Endothelial cell of umbilical vein (primary cell): ENCODE measurements at regions of chr7 and their contacts with region 1.

Region 1: GRCh38 chr7:92833024-92833765 is 3.2 kb downstream of the CDK6 start:
- DNase-seq: peak; percentile 78
- H3K4me3 ChIP-seq: peak overlapping the region; percentile 68 to 80 (median 71)
- H3K27ac ChIP-seq: peak overlapping the region; percentile 78
- H3K4me1 ChIP-seq: peaks cover 35% of the 10 kb centered on the region
- H3K27me3 ChIP-seq: peaks cover 0 to 12% of the 10 kb centered on the region in 2 experiments
- CTCF ChIP-seq: peak; percentile 79 to 92
- POLR2A ChIP-seq: no peak

Region 2: GRCh38 chr7:92621026-92621540 is 212.1 kb before region 1 on chr7:
- CTCF ChIA-PET with region 1: interaction called, 52 read pairs
- POLR2A ChIA-PET with region 1: no interaction called
- dilution Hi-C with region 1: no loop called
- intact Hi-C with region 1: loop called (anchors 1 kb)
- DNase-seq: peak; percentile 90
- H3K4me3 ChIP-seq: no peak overlapping the region
- H3K27ac ChIP-seq: peak overlapping the region; percentile 75
- H3K4me1 ChIP-seq: peaks cover 23% of the 10 kb centered on the region
- H3K27me3 ChIP-seq: no peaks in the 10 kb centered on the region
- CTCF ChIP-seq: peak; percentile 53 to 64
- POLR2A ChIP-seq: no peak

Region 3: GRCh38 chr7:92698237-92698841 is 134.9 kb before region 1 on chr7:
- CTCF ChIA-PET with region 1: interaction called, 77 read pairs
- POLR2A ChIA-PET with region 1: no interaction called
- dilution Hi-C with region 1: no loop called
- intact Hi-C with region 1: loop called (anchors 1 kb)
- DNase-seq: peak; percentile 95
- H3K4me3 ChIP-seq: peak overlapping the region in 1 of 3 experiments; percentile 1
- H3K27ac ChIP-seq: peak overlapping the region; percentile 75
- H3K4me1 ChIP-seq: peaks cover 44% of the 10 kb centered on the region
- H3K27me3 ChIP-seq: no peaks in the 10 kb centered on the region
- CTCF ChIP-seq: no peak
- POLR2A ChIP-seq: peak; percentile 35

Region 4: GRCh38 chr7:92768501-92769393 is 64.4 kb before region 1 on chr7:
- CTCF ChIA-PET with region 1: interaction called, 16 read pairs
- POLR2A ChIA-PET with region 1: no interaction called
- dilution Hi-C with region 1: no loop called
- intact Hi-C with region 1: loop called (anchors 5 kb)
- DNase-seq: no peak
- H3K4me3 ChIP-seq: no peak overlapping the region
- H3K27ac ChIP-seq: no peak overlapping the region
- H3K4me1 ChIP-seq: peaks cover 14% of the 10 kb centered on the region
- H3K27me3 ChIP-seq: no peaks in the 10 kb centered on the region
- CTCF ChIP-seq: no peak
- POLR2A ChIP-seq: no peak

Region 5: DNA sequence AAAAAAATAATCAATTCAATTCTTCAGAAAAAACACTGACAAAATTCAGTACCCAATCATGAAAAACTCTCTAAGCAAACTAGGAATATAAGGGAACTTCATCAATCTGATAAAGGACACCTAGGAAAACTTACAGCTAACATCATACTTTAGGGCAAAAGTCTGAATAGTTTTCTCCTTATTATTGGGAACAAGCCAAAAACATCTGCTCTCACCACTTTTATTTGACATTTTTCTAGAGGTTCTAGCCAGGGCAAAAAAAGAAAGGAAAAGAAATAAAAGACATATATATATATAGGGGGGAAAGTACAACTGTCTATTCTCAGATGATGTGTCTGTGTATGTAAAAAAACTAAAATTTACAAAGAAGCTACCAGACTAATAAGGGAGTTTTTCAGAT is 15.8 kb before region 1 on chr7:
- CTCF ChIA-PET with region 1: interaction called, 13 read pairs
- POLR2A ChIA-PET with region 1: no interaction called
- dilution Hi-C with region 1: no loop called
- intact Hi-C with region 1: loop called (anchors 1 kb)
- DNase-seq: no peak
- H3K4me3 ChIP-seq: no peak overlapping the region
- H3K27ac ChIP-seq: no peak overlapping the region
- H3K4me1 ChIP-seq: peaks cover 8% of the 10 kb centered on the region
- H3K27me3 ChIP-seq: no peaks in the 10 kb centered on the region
- CTCF ChIP-seq: no peak
- POLR2A ChIP-seq: no peak

Region 6: DNA sequence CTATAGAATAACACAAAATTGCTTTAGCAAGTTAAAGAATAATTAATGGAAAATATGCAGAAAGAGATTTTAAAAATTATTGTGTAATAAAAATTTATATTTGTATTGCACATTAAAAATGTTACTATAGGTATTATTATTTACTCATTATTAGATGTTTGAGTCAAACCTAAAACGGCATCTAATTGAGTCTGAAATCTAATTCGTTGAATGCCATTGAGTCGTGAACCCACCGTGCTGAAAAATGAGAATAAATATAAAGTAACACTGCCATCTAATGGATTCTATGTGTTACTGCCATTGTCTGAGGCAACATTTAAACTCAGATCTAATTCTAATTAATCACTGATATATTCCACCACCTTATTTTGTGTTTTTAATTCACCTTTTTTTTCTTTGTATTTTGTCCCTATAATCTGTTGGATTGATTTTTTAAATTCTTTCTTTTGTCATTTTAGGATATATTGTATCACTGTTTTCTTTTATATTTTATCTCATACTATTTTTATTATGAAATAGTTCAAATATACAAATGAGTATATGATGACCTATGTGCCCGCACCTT is 222.4 kb after region 1 on chr7:
- CTCF ChIA-PET with region 1: interaction called, 7 read pairs
- POLR2A ChIA-PET with region 1: no interaction called
- dilution Hi-C with region 1: no loop called
- intact Hi-C with region 1: loop called (anchors 1 kb)
- DNase-seq: peak; percentile 53
- H3K4me3 ChIP-seq: no peak overlapping the region
- H3K27ac ChIP-seq: no peak overlapping the region
- H3K4me1 ChIP-seq: no peaks in the 10 kb centered on the region
- H3K27me3 ChIP-seq: peaks cover 0 to 3% of the 10 kb centered on the region in 2 experiments
- CTCF ChIP-seq: peak; percentile 33 to 48
- POLR2A ChIP-seq: no peak